ENCODE measurements at regions of chr22 and their contacts with region 1.

Region 1: GRCh38 chr22:30196141-30196879 is 50.2 kb downstream of the LIF start:
- DNase-seq: peak; percentile 98
- H3K4me3 Mint-ChIP-seq: peak overlapping the region; percentile 66
- H3K27ac Mint-ChIP-seq: peak overlapping the region; percentile 96
- H3K4me1 Mint-ChIP-seq: peaks cover 33% of the 10 kb centered on the region
- H3K27me3 Mint-ChIP-seq: no peaks in the 10 kb centered on the region
- CTCF ChIP-seq: no peak

Region 2: GRCh38 chr22:30116362-30117117 is 79.8 kb before region 1 on chr22:
- CTCF ChIA-PET with region 1: no interaction called
- POLR2A ChIA-PET with region 1: interaction called, 4 read pairs
- intact Hi-C with region 1: loop called (anchors 5 kb)
- DNase-seq: peak; percentile 42
- H3K4me3 Mint-ChIP-seq: no peak overlapping the region
- H3K27ac Mint-ChIP-seq: no peak overlapping the region
- H3K4me1 Mint-ChIP-seq: peaks cover 9% of the 10 kb centered on the region
- H3K27me3 Mint-ChIP-seq: no peaks in the 10 kb centered on the region
- CTCF ChIP-seq: no peak

Region 3: DNA sequence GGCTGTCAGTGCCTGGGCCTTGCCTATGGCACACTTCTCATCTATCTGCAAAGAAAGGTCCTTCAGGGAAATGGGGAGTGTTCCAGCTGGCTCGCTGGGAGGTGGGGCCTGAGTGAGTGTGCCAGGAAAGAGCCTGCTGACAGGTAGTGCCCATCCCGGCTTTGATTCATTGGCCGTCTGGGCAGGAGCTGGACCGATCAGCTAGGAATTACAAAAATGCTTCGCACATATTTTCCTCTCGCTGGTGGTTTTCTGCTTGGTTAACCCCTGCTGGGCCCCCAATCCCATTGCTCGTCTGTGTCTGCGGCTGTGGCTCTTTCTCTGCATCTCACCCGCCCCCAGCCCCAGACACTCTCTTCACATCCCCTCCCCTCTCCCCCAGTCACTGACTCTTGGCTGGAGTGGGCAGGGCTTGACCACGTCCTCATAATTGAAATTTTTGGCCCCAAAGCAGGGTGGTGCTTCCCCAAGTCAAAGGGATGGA is 39.4 kb after region 1 on chr22:
- CTCF ChIA-PET with region 1: no interaction called
- POLR2A ChIA-PET with region 1: no interaction called
- intact Hi-C with region 1: no loop called
- DNase-seq: peak; percentile 57
- H3K4me3 Mint-ChIP-seq: no peak overlapping the region
- H3K27ac Mint-ChIP-seq: peak overlapping the region; percentile 78
- H3K4me1 Mint-ChIP-seq: peaks cover 22% of the 10 kb centered on the region
- H3K27me3 Mint-ChIP-seq: no peaks in the 10 kb centered on the region
- CTCF ChIP-seq: no peak

Measured in MCF 10A (cell line).